B cell (primary cell): ENCODE measurements at regions of chr14 and their contacts with region 1.

Region 1: DNA sequence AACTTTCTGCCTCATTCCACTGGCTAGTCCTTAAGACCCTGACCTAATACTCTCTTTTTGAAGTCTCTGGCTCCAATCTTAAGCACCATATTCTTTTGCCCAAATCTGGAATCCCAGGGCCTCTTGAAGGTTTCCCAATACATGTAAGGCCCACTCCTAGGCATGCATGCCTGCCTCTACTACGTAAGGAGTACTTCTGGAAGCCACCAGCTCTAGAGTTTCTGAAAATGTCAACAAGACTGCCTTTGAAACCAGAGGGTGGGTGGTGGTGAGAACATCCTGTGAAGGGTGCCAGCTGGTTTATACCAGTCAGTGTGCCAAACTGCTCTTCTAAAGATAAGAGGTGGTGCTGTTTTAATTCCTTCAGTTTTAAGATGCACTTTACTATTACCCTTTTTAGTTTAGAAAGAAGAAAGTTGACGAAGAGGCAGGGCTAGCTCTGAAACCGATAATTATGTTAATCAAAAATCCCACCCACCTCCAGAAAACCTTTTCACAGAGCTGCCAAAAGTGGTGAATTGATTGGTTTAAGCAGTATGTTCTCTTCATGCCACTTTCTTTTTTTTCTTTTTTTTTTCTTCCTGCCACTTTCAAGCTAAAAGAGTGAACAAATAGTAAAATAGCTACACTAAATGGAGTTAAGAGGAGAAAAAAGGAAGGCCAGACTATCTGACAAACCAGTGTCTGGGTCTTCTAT is 8.7 kb upstream of the WDR89 start:
- DNase-seq: no peak
- ATAC-seq: no peak
- H3K4me3 ChIP-seq: no peak overlapping the region
- H3K4me3 Mint-ChIP-seq: no peak overlapping the region
- H3K27ac ChIP-seq: peak overlapping the region in 1 of 2 donors; percentile 3
- H3K27ac Mint-ChIP-seq: no peak overlapping the region
- H3K4me1 ChIP-seq: peaks cover 0 to 4% of the 10 kb centered on the region in 2 donors
- H3K4me1 Mint-ChIP-seq: peaks cover 9% of the 10 kb centered on the region
- H3K27me3 ChIP-seq: no peaks in the 10 kb centered on the region
- H3K27me3 Mint-ChIP-seq: no peaks in the 10 kb centered on the region
- CTCF ChIP-seq: no peak

Region 2: GRCh38 chr14:63564318-63564717 is 86.1 kb before region 1 on chr14:
- CTCF ChIA-PET with region 1: no interaction called
- POLR2A ChIA-PET with region 1: no interaction called
- intact Hi-C with region 1: no loop called
- DNase-seq: no peak
- ATAC-seq: no peak
- H3K4me3 ChIP-seq: no peak overlapping the region
- H3K4me3 Mint-ChIP-seq: no peak overlapping the region
- H3K27ac ChIP-seq: no peak overlapping the region
- H3K27ac Mint-ChIP-seq: no peak overlapping the region
- H3K4me1 ChIP-seq: no peaks in the 10 kb centered on the region
- H3K4me1 Mint-ChIP-seq: no peaks in the 10 kb centered on the region
- H3K27me3 ChIP-seq: peaks cover 0 to 2% (median 0%) of the 10 kb centered on the region in 4 experiments
- H3K27me3 Mint-ChIP-seq: peaks cover 20% of the 10 kb centered on the region
- CTCF ChIP-seq: no peak

Region 3: GRCh38 chr14:63672417-63673180 is 22.2 kb after region 1 on chr14:
- CTCF ChIA-PET with region 1: interaction called, 3 read pairs
- POLR2A ChIA-PET with region 1: interaction called, 11 read pairs
- intact Hi-C with region 1: no loop called
- DNase-seq: no peak
- ATAC-seq: no peak
- H3K4me3 ChIP-seq: no peak overlapping the region
- H3K4me3 Mint-ChIP-seq: no peak overlapping the region
- H3K27ac ChIP-seq: no peak overlapping the region
- H3K27ac Mint-ChIP-seq: no peak overlapping the region
- H3K4me1 ChIP-seq: no peaks in the 10 kb centered on the region
- H3K4me1 Mint-ChIP-seq: no peaks in the 10 kb centered on the region
- H3K27me3 ChIP-seq: no peaks in the 10 kb centered on the region
- H3K27me3 Mint-ChIP-seq: no peaks in the 10 kb centered on the region
- CTCF ChIP-seq: no peak